CD14-positive monocyte (primary cell): ENCODE measurements at regions of chr1 and their contacts with region 1.

Region 1: DNA sequence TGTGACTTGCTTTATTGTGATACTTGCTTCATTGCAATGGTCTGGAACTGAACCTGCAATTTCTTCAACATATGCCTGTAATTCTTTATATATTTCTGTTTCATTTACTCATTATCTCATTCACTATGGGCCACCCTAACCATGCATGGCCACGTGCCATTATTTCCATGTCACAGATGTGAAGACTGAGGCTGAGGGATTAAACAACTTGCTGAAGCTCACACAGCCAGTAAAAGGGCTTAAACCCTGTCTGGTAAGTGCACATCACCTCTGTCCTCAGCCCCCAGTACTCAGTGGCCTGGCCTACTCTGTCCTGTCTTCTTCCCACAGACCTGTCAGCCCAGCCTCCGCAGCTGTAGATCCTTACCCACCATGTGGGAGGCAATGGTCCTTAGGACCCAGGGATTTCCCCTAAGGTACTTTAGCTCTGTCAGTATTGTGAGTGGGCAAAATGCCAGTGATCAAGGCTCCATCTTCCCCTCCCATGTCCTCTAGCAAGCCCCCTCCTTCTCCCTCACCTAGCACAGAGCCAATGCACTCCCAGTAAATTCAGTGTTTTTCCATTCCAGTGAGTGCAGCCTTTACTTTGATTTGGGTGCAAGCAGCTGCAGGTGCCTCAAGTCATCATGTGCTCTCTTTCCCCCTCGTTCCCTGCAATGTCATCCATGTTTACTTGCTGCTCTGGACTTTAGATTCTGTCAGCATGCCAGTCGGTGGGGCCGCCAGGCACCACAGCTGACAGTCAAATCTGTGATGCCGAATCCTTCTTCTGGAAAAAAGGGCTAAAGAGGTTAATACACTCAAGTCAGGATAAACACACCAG is 228.2 kb upstream of the PROX1 start:
- DNase-seq: no peak
- H3K4me3 ChIP-seq: no peak overlapping the region
- H3K4me3 Mint-ChIP-seq: no peak overlapping the region
- H3K27ac ChIP-seq: no peak overlapping the region
- H3K27ac Mint-ChIP-seq: no peak overlapping the region
- H3K4me1 ChIP-seq: no peaks in the 10 kb centered on the region
- H3K4me1 Mint-ChIP-seq: no peaks in the 10 kb centered on the region
- H3K27me3 ChIP-seq: no peaks in the 10 kb centered on the region
- H3K27me3 Mint-ChIP-seq: peaks cover 0 to 4% (median 2%) of the 10 kb centered on the region in 3 donors
- CTCF ChIP-seq: no peak

Region 2: DNA sequence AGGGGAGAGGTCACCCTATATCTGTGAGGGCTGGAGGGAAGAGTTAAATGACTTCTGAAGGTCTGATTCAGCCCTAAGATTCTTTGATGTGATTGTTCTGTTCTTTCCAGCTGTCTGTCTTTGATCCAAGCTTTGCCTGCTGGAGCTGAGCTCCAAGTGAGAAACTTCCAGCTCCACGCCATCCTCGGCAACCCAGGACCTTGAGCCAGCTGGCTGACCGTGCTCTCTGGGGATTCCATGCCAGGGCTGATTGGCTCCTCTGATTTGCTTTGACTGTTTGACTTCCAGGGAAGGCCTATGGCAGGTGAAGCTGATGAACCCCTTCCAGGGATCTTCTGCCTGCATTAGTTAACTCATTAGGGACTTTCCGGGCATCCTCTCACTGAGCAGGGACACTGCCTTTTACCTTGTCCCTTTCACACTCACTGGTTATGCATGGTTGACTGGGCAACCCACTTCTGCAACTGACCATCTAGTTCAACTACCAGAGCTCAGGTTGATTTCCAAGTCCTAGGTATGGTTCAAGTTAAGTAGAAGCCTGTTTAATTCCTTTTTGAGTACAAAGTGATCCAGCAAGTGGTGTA is 302.4 kb before region 1 on chr1:
- intact Hi-C with region 1: no loop called
- DNase-seq: no peak
- H3K4me3 ChIP-seq: no peak overlapping the region
- H3K4me3 Mint-ChIP-seq: no peak overlapping the region
- H3K27ac ChIP-seq: no peak overlapping the region
- H3K27ac Mint-ChIP-seq: no peak overlapping the region
- H3K4me1 ChIP-seq: no peaks in the 10 kb centered on the region
- H3K4me1 Mint-ChIP-seq: no peaks in the 10 kb centered on the region
- H3K27me3 ChIP-seq: no peaks in the 10 kb centered on the region
- H3K27me3 Mint-ChIP-seq: peaks cover 0 to 5% (median 4%) of the 10 kb centered on the region in 3 donors
- CTCF ChIP-seq: no peak

Region 3: DNA sequence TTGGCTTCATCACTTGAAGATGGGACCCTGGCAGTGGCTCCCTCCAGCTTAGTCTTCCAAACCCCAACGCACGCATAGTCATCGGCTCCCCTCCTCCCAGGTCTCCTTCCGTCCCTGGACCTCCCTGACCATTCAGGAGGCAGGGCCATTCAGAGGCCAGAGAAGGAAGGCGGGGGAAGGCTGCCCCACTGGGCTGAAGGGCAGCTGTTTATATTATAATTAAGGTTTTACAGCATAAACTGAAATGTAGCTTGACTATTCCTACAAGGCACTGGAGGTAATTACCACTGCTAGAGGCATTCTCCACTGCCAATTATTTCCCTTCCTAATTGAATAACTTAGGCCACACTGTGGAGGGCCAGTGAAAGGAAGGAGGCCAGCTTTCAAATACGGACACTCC is 57.6 kb after region 1 on chr1:
- intact Hi-C with region 1: loop called in 1 of 2 experiments (anchors 10 kb)
- DNase-seq: no peak
- H3K4me3 ChIP-seq: no peak overlapping the region
- H3K4me3 Mint-ChIP-seq: no peak overlapping the region
- H3K27ac ChIP-seq: no peak overlapping the region
- H3K27ac Mint-ChIP-seq: no peak overlapping the region
- H3K4me1 ChIP-seq: no peaks in the 10 kb centered on the region
- H3K4me1 Mint-ChIP-seq: no peaks in the 10 kb centered on the region
- H3K27me3 ChIP-seq: no peaks in the 10 kb centered on the region
- H3K27me3 Mint-ChIP-seq: peaks cover 0 to 3% (median 0%) of the 10 kb centered on the region in 3 donors
- CTCF ChIP-seq: no peak